ENCODE measurements at regions of chr19 and their contacts with region 1.

Region 1: DNA sequence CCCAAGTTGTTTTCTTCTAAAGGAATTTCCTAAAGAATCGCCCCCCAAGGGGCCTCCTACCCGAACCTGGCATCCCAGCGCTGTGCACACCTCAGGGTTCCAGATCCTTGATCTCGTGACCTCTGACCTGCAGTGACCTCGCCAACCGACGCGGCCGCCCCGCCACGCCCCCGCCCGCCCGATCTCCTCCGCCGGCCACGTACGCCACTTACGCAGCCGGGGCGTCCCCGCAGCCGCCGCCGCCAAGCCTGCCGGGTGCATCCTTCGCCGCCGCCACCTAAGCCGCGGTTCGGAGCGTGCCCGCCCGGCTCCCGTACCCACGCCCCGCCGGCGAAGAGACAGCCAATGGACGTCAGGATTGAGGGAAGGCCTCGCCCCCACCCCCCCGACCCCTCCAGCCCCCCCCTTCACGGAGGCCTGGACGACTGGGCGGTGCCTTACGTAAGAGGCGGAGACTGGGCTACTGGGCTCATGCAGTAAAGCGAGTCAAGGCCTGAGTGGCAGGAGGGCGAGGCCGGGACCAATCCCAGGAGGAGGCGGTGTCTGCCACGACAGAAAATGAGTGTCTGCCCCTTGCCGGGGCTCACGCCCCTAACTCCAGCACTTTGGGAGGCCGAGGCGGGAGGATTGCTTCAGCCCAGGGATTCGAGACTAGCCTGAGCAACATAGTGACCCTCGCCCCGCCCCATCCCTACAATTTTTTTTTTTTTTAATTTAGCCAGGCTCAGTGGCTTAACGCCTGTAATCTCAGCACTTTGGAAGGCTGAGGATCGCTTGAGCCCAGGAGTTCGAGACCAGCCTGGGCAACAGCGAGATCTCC is at the start of gene YIF1B:
- DNase-seq: peak; percentile 89
- ATAC-seq: peak; percentile 92
- H3K4me3 Mint-ChIP-seq: peak within 1 kb of the TSS; percentile 85
- H3K27ac Mint-ChIP-seq: peak within 1 kb of the TSS; percentile 94
- H3K4me1 Mint-ChIP-seq: peaks cover 49% of the 10 kb centered on the region
- H3K27me3 Mint-ChIP-seq: no peaks in the 10 kb centered on the region
- CTCF ChIP-seq: no peak
- total RNA-seq, gene YIF1B: 28.7 and 30.1 TPM in 2 replicates

Region 2: GRCh38 chr19:38015216-38015615 is 300.7 kb before region 1 on chr19:
- CTCF ChIA-PET with region 1: no interaction called
- POLR2A ChIA-PET with region 1: interaction called, 11 read pairs
- intact Hi-C with region 1: no loop called
- DNase-seq: no peak
- ATAC-seq: no peak
- H3K4me3 Mint-ChIP-seq: no peak overlapping the region
- H3K27ac Mint-ChIP-seq: peak overlapping the region; percentile 61
- H3K4me1 Mint-ChIP-seq: peaks cover 83% of the 10 kb centered on the region
- H3K27me3 Mint-ChIP-seq: no peaks in the 10 kb centered on the region
- CTCF ChIP-seq: no peak

Region 3: GRCh38 chr19:38277969-38278680 is 37.7 kb before region 1 on chr19:
- CTCF ChIA-PET with region 1: no interaction called
- POLR2A ChIA-PET with region 1: no interaction called
- intact Hi-C with region 1: no loop called
- DNase-seq: no peak
- ATAC-seq: no peak
- H3K4me3 Mint-ChIP-seq: no peak overlapping the region
- H3K27ac Mint-ChIP-seq: no peak overlapping the region
- H3K4me1 Mint-ChIP-seq: peaks cover 11% of the 10 kb centered on the region
- H3K27me3 Mint-ChIP-seq: no peaks in the 10 kb centered on the region
- CTCF ChIP-seq: no peak